H1 (cell line): ENCODE measurements at regions of chr9 and their contacts with region 1.

Region 1: GRCh38 chr9:124852829-124853531 is at the start of gene WDR38:
- DNase-seq: peak in 1 of 2 experiments; percentile 92
- H3K4me3 ChIP-seq: peak within 1 kb of the TSS; percentile 25 to 61 (median 48)
- H3K27ac ChIP-seq: no peak within 1 kb of the TSS
- H3K4me1 ChIP-seq: 0 out of 7 replicates have a peak, but pooled peaks cover 0 to 3% (median under 1%) of the 10 kb centered on the region in 4 experiments
- H3K27me3 ChIP-seq: no peaks in the 10 kb centered on the region
- CTCF ChIP-seq: peak in 2 of 3 experiments; percentile 73 to 91; a peak in 3 of 4 replicates
- EP300 ChIP-seq: no peak
- POLR2A ChIP-seq: no peak
- RAD21 ChIP-seq: peak; percentile 74 to 77
- total RNA-seq, gene WDR38: not detected in 2 replicates

Region 2: DNA sequence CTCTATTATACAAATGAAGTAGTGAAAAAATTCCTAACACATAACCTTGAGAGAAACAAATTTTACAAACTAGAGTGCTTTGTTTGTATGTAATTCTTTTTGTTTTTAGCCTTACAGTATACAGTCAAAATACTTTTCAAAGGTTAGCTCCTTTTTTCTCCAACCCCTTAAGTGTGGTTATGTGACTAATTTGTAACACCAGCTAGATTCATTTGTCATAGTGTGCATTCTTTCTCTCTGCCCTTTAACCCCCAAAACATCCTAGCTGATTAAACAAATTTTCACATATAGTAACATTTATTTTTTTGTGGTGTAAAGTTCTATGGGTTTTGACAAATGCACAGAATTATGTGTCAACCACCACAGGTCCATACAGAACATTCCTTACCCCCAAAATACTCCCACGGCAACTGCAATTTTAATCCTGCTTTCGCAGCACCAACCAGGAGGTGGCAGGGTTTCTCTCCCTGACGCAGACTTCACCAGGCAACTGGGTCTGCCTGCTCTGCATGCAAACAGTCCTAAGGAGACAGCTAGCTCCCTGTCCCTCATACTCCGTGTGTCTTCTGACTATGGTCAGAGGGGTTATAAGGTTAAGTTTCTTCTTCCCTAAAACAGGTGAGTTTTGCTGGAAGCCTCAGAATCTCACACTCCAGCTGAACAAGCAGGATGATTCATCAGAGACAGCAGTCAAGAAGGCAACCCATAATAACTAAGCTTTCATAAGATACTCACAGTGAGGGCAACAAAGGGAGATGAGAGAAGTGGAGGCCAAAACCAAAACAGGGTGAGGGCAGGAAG is 301.3 kb before region 1 on chr9:
- CTCF ChIA-PET with region 1: interaction called, 12 read pairs
- POLR2A ChIA-PET with region 1: no interaction called
- DNase-seq: peak; percentile 56 to 78
- H3K4me3 ChIP-seq: no peak overlapping the region
- H3K27ac ChIP-seq: no peak overlapping the region
- H3K4me1 ChIP-seq: peaks cover 3 to 8% (median 5%) of the 10 kb centered on the region in 4 experiments; a peak in 5 of 7 replicates
- H3K27me3 ChIP-seq: no peaks in the 10 kb centered on the region
- CTCF ChIP-seq: peak; percentile 86 to 95 (median 93)
- EP300 ChIP-seq: no peak
- POLR2A ChIP-seq: no peak
- RAD21 ChIP-seq: peak; percentile 94 to 98

Region 3: DNA sequence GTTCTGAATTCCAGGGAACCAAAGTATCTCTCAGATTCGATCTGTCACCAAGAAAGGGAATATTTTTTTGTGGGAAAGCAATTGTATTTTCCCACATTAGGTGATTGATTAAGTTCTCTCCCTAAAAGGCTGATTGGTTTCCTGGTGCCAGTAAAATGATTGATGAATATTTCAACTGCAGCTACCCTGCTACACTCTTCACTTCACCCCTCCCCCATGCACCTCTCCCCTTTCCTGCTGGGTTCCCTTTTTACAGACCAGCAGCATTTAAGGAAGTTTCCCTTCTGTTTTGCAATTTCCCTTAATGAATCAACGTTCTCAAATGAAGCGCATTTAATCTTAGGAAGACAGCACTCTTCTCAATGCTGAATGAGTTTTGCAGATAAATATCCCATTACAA is 94.9 kb before region 1 on chr9:
- CTCF ChIA-PET with region 1: interaction called, 31 read pairs
- POLR2A ChIA-PET with region 1: interaction called, 5 read pairs
- DNase-seq: no peak
- H3K4me3 ChIP-seq: peak overlapping the region; percentile 22 to 56 (median 24); a peak in 6 of 8 replicates
- H3K27ac ChIP-seq: peak overlapping the region; percentile 46; the same call in 1 of the 2 replicates
- H3K4me1 ChIP-seq: peaks cover 15 to 55% (median 29%) of the 10 kb centered on the region in 4 experiments
- H3K27me3 ChIP-seq: no peaks in the 10 kb centered on the region
- CTCF ChIP-seq: no peak
- EP300 ChIP-seq: peak in 1 of 2 experiments; percentile 51; a peak in 1 of 3 replicates
- POLR2A ChIP-seq: no peak
- RAD21 ChIP-seq: no peak

Region 4: GRCh38 chr9:124839612-124840299 is 13.2 kb before region 1 on chr9:
- CTCF ChIA-PET with region 1: interaction called, 1,529 read pairs
- POLR2A ChIA-PET with region 1: interaction called, 23 read pairs
- DNase-seq: peak in 1 of 2 experiments; percentile 84
- H3K4me3 ChIP-seq: no peak overlapping the region
- H3K27ac ChIP-seq: 0 out of 2 replicates have a peak overlapping the region, but pooled peaks have one; percentile 5
- H3K4me1 ChIP-seq: peaks cover 0 to 14% (median 3%) of the 10 kb centered on the region in 4 experiments; a peak in 4 of 7 replicates
- H3K27me3 ChIP-seq: no peaks in the 10 kb centered on the region
- CTCF ChIP-seq: peak; percentile 71 to 89 (median 78)
- EP300 ChIP-seq: no peak
- POLR2A ChIP-seq: no peak
- RAD21 ChIP-seq: peak; percentile 50 to 61

Region 5: GRCh38 chr9:124880501-124880900 is 27.5 kb after region 1 on chr9:
- CTCF ChIA-PET with region 1: interaction called, 21 read pairs
- POLR2A ChIA-PET with region 1: interaction called, 573 read pairs
- DNase-seq: peak in 1 of 2 experiments; percentile 66
- H3K4me3 ChIP-seq: peak overlapping the region in 1 of 4 experiments; percentile 27; a peak in 2 of 8 replicates
- H3K27ac ChIP-seq: no peak overlapping the region
- H3K4me1 ChIP-seq: peaks cover 5 to 18% (median 13%) of the 10 kb centered on the region in 4 experiments
- H3K27me3 ChIP-seq: no peaks in the 10 kb centered on the region
- CTCF ChIP-seq: no peak
- EP300 ChIP-seq: no peak
- POLR2A ChIP-seq: no peak
- RAD21 ChIP-seq: no peak

Region 6: GRCh38 chr9:124894741-124895170 is 41.8 kb after region 1 on chr9:
- CTCF ChIA-PET with region 1: interaction called, 29 read pairs
- POLR2A ChIA-PET with region 1: interaction called, 573 read pairs
- DNase-seq: no peak
- H3K4me3 ChIP-seq: no peak overlapping the region
- H3K27ac ChIP-seq: no peak overlapping the region
- H3K4me1 ChIP-seq: no peaks in the 10 kb centered on the region
- H3K27me3 ChIP-seq: no peaks in the 10 kb centered on the region
- CTCF ChIP-seq: peak in 2 of 3 experiments; percentile 60 to 67; a peak in 3 of 4 replicates
- EP300 ChIP-seq: no peak
- POLR2A ChIP-seq: no peak
- RAD21 ChIP-seq: peak; percentile 69 to 85